B cell (primary cell): ENCODE measurements at regions of chr18 and their contacts with region 1.

Region 1: DNA sequence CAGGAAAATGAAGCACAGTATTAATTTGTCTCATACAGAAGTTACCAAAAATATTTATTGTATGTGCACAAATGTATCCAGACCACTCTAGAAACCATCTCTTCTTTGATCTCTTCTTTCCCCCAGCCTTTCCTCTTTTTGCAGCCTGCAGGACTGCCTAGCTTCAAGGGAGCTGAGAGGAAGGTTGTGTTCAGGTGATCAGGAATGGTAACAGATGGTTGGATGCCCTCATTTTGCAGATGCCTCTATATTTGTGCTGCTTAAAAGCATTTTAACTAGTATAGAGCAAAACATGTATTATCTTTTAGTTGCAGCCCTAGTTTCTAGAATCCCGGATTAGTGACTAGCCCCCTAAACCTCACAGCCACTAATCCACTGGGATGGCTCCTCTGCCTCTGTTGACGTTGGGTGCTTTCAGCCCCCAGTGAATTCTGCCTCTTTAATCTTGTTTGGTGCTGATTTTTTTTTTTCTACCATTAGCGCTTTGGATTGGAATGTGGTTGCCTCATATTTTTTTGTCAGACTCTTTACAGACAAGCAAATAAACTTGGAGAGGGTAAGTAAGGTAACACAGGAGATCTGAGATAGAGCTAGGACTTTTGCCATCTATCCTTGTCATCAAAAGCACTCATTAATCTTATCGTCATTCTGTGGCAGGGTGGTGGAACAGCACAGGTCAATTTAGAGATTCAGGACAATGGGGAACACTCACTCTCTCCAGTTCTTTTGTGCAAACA is 103.8 kb upstream of the NDUFV2 start:
- DNase-seq: no peak
- ATAC-seq: no peak
- H3K4me3 ChIP-seq: no peak overlapping the region
- H3K4me3 Mint-ChIP-seq: no peak overlapping the region
- H3K27ac ChIP-seq: no peak overlapping the region
- H3K27ac Mint-ChIP-seq: no peak overlapping the region
- H3K4me1 ChIP-seq: no peaks in the 10 kb centered on the region
- H3K4me1 Mint-ChIP-seq: no peaks in the 10 kb centered on the region
- H3K27me3 ChIP-seq: peaks cover 0 to 4% (median 2%) of the 10 kb centered on the region in 4 experiments
- H3K27me3 Mint-ChIP-seq: peaks cover 24% of the 10 kb centered on the region
- CTCF ChIP-seq: no peak

Region 2: DNA sequence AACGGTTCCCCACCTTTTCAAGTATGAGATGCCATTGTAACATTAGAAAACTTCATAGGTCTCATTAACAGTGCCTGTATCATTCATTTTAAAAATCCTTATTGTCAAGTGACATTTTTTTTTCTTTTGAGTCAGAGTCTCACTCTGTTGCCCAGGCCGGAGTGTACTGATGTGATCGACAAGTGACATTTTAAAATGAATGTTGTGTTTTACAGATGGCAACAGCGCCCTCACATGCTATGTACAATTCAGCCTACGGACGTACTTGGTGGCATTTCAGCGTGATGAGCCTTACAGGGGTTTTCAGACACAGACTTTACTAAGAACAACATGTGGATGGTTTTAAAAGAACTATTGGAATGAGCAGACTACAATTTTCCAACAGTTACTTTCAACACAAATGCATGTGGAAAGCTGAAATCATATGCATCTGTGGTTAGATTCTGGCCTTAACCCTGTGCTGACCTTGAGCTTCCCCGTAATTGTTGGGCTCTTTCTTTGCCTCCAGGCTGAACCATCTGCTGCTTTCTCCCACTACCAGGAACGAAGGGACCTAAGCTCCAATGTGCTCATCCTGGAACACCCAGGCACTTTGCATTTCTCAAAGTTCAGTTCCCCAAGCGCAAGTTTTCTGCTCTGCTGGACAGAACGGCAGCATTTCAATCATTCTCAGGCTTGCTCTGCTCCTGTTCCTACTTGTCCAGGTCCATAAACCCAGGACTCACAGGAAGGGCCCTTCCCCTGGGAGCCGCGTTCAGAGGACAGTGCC is 16.0 kb before region 1 on chr18:
- CTCF ChIA-PET with region 1: interaction called, 22 read pairs
- POLR2A ChIA-PET with region 1: no interaction called
- intact Hi-C with region 1: no loop called
- DNase-seq: peak; percentile 74
- ATAC-seq: peak; percentile 71
- H3K4me3 ChIP-seq: no peak overlapping the region
- H3K4me3 Mint-ChIP-seq: no peak overlapping the region
- H3K27ac ChIP-seq: no peak overlapping the region
- H3K27ac Mint-ChIP-seq: peak overlapping the region; percentile 20
- H3K4me1 ChIP-seq: peaks cover 22 to 26% of the 10 kb centered on the region in 2 donors
- H3K4me1 Mint-ChIP-seq: peaks cover 27% of the 10 kb centered on the region
- H3K27me3 ChIP-seq: no peaks in the 10 kb centered on the region
- H3K27me3 Mint-ChIP-seq: no peaks in the 10 kb centered on the region
- CTCF ChIP-seq: peak; percentile 52

Region 3: GRCh38 chr18:9516437-9517064 is 517.9 kb after region 1 on chr18:
- CTCF ChIA-PET with region 1: no interaction called
- POLR2A ChIA-PET with region 1: no interaction called
- intact Hi-C with region 1: no loop called
- DNase-seq: peak; percentile 61
- ATAC-seq: peak; percentile 58
- H3K4me3 ChIP-seq: no peak overlapping the region
- H3K4me3 Mint-ChIP-seq: no peak overlapping the region
- H3K27ac ChIP-seq: no peak overlapping the region
- H3K27ac Mint-ChIP-seq: no peak overlapping the region
- H3K4me1 ChIP-seq: no peaks in the 10 kb centered on the region
- H3K4me1 Mint-ChIP-seq: no peaks in the 10 kb centered on the region
- H3K27me3 ChIP-seq: no peaks in the 10 kb centered on the region
- H3K27me3 Mint-ChIP-seq: no peaks in the 10 kb centered on the region
- CTCF ChIP-seq: peak; percentile 98